MCF 10A (cell line): ENCODE measurements at regions of chr3 and their contacts with region 1.

Region 1: DNA sequence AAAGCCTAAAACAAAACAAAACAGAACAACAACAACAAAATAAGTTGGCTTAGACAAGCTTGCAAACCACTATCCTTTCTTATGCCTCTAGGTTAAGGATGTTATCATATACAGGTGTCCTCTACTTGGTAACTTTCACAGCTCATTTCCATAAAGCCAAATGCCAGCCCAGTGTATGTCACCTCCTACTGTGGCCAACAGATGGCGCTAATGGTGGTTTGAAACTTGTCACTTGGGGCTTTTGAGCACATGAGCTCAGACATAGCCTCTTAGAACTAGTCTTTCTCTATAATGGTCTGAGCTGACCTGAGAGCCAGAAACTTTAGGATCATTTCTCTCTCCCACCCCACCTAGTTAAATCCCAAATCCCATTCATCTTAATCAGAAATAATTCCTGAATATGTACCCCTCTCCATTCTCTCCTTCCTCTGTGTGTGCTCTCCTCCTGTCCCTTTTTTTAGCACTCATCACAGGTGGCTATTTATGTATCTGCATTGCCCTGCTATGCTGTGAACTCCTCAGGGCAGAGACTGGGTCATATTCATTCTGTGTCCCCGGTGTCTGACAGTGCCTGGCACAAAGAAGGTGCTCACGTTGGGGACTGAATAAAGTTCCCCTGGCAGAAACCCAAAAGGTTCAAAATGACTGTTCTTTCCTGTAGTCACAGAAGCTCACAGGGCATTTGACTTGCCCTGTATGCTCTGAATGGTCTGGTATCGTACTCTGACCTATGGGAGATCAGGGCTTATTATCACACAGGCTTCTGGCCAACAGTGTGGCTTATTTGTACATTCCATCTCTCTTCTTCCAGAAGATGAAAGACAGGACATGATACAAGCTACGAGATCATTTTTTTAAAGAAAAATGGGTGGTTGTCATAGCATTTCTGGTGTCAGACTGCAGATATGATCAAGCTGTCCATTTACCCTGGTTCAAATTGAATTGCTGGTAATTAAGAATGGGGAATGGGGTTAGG is 319.3 kb upstream of the AZI2 start:
- DNase-seq: peak; percentile 83
- H3K4me3 Mint-ChIP-seq: no peak overlapping the region
- H3K27ac Mint-ChIP-seq: no peak overlapping the region
- H3K4me1 Mint-ChIP-seq: no peaks in the 10 kb centered on the region
- H3K27me3 Mint-ChIP-seq: no peaks in the 10 kb centered on the region
- CTCF ChIP-seq: peak; percentile 80

Region 2: DNA sequence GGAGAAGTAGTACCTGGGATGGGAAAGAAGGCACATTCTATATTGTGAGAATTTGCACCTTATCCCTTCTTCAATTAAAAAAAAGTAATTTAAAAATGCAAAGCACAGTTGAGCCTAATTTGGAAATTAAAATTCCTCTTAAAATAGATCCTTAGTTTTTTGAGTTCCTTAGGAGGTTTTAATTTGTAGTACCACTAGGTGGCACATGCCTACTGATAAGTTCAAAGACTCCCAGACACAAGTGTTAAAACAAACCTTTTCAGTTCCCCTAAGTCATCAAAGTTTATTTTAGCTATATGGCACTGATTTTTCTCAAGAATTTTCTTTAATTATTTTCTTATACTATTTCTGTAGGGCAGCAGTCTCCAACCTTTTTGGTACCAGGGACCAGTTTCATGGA is 191.7 kb before region 1 on chr3:
- CTCF ChIA-PET with region 1: interaction called, 14 read pairs
- POLR2A ChIA-PET with region 1: no interaction called
- intact Hi-C with region 1: no loop called
- DNase-seq: peak; percentile 54
- H3K4me3 Mint-ChIP-seq: no peak overlapping the region
- H3K27ac Mint-ChIP-seq: no peak overlapping the region
- H3K4me1 Mint-ChIP-seq: no peaks in the 10 kb centered on the region
- H3K27me3 Mint-ChIP-seq: no peaks in the 10 kb centered on the region
- CTCF ChIP-seq: peak; percentile 72

Region 3: GRCh38 chr3:28651159-28651558 is 16.8 kb before region 1 on chr3:
- CTCF ChIA-PET with region 1: interaction called, 23 read pairs
- POLR2A ChIA-PET with region 1: interaction called, 3 read pairs
- intact Hi-C with region 1: no loop called
- DNase-seq: peak; percentile 8
- H3K4me3 Mint-ChIP-seq: no peak overlapping the region
- H3K27ac Mint-ChIP-seq: no peak overlapping the region
- H3K4me1 Mint-ChIP-seq: no peaks in the 10 kb centered on the region
- H3K27me3 Mint-ChIP-seq: no peaks in the 10 kb centered on the region
- CTCF ChIP-seq: no peak

Region 4: GRCh38 chr3:28690176-28690575 is 22.2 kb after region 1 on chr3:
- CTCF ChIA-PET with region 1: interaction called, 11 read pairs
- POLR2A ChIA-PET with region 1: no interaction called
- intact Hi-C with region 1: no loop called
- DNase-seq: no peak
- H3K4me3 Mint-ChIP-seq: no peak overlapping the region
- H3K27ac Mint-ChIP-seq: no peak overlapping the region
- H3K4me1 Mint-ChIP-seq: no peaks in the 10 kb centered on the region
- H3K27me3 Mint-ChIP-seq: no peaks in the 10 kb centered on the region
- CTCF ChIP-seq: no peak

Region 5: GRCh38 chr3:28726840-28727239 is 58.9 kb after region 1 on chr3:
- CTCF ChIA-PET with region 1: interaction called, 12 read pairs
- POLR2A ChIA-PET with region 1: no interaction called
- intact Hi-C with region 1: loop called (anchors 2 kb)
- DNase-seq: peak; percentile 76
- H3K4me3 Mint-ChIP-seq: no peak overlapping the region
- H3K27ac Mint-ChIP-seq: no peak overlapping the region
- H3K4me1 Mint-ChIP-seq: no peaks in the 10 kb centered on the region
- H3K27me3 Mint-ChIP-seq: no peaks in the 10 kb centered on the region
- CTCF ChIP-seq: peak; percentile 56

Region 6: DNA sequence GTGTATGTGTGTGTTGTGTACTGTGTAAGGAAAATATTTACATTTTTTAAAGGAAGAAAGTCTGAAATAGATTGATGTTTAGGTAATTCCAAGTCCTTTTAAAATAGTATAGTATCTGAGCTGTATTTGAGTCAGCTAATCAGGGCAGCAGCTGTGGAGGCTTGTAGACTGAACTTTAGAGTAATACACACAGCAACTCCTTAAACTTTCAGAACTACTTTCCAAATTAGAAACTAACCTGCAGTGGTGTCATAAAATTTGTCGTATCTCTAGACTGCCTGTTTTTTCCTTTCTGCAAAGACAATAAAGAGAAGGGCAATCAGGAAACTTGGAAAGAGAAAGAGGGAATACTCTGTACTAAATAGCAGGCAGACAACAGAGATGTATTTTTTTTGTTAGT is 71.7 kb after region 1 on chr3:
- CTCF ChIA-PET with region 1: no interaction called
- POLR2A ChIA-PET with region 1: no interaction called
- intact Hi-C with region 1: no loop called
- DNase-seq: no peak
- H3K4me3 Mint-ChIP-seq: no peak overlapping the region
- H3K27ac Mint-ChIP-seq: no peak overlapping the region
- H3K4me1 Mint-ChIP-seq: peaks cover 16% of the 10 kb centered on the region
- H3K27me3 Mint-ChIP-seq: no peaks in the 10 kb centered on the region
- CTCF ChIP-seq: no peak

Region 7: DNA sequence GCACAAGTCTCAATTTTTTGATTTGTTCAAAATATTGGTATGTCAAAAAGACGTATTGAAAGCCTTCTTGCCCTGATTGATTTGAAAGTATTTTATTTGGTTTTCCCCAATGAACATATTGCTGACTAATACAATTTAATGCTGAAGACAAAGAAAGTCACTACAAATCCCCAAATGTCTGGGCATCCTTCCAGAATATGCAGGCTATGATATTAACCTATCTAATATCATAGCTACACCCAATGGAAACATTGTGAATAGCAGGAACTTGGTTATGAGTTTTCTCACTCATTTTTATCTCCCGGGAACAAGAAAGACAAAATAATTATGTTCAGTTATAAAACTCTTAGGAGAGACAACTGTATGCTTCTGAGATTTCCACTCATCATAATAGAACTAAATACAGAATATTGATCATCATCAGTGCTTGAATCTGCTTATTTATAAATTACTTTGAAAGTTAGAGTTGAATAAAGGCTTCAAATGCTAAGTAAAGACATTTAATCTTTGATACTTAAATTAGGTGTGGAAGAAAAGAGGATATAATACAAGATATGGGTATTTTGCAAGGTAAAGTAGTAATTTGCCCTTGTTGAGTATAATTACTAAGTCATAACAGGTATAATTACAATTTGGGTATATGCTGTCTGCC is 1096.8 kb after region 1 on chr3:
- CTCF ChIA-PET with region 1: interaction called, 7 read pairs
- POLR2A ChIA-PET with region 1: no interaction called
- intact Hi-C with region 1: loop called (anchors 1 kb)
- DNase-seq: peak; percentile 94
- H3K4me3 Mint-ChIP-seq: no peak overlapping the region
- H3K27ac Mint-ChIP-seq: peak overlapping the region; percentile 35
- H3K4me1 Mint-ChIP-seq: peaks cover 17% of the 10 kb centered on the region
- H3K27me3 Mint-ChIP-seq: no peaks in the 10 kb centered on the region
- CTCF ChIP-seq: peak; percentile 79